Activated CD4-positive, alpha-beta memory T cell treated with anti-CD3 and anti-CD28 coated beads for 36 hours (primary cell): ENCODE measurements at regions of chr15 and their contacts with region 1.

Region 1: DNA sequence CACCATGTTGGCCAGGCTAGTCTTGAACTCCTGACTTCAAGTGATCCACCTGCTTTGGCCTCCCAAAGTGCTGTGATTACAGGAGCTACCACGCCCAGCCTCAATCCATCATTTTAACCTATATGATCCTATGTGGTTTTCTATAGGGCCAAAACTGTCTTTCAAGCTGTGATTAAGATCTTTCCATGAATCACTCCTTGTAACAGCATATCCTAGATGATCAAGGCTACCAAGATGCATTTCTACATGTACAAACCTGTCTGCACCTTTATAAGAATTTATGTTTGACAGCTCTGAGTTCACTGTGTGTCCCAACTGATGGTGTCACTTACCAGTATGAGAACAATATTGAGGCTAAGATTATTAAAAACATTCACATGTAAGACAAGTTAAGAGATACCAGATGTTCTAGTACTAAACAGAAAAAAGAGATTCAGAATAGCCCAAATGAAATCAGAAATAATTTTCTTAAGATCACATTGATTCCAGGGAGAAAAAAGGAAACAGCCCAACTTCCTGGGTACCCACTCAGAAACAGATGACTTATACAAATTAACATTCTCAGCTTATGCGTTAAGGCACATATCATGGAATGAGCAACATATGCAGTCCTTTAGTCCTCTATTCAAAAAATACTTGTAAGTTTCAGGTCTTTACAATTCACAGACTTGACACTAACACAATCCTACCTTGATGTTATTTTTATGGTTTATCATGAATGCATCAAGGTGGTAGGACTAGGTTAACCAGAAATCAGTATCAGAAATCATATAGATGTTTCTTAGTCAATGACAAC is 24.8 kb upstream of the PPIB start:
- DNase-seq: no peak
- H3K4me3 Mint-ChIP-seq: peak overlapping the region; percentile 29
- H3K27ac Mint-ChIP-seq: peak overlapping the region; percentile 76
- H3K4me1 Mint-ChIP-seq: peaks cover 18% of the 10 kb centered on the region
- H3K27me3 Mint-ChIP-seq: no peaks in the 10 kb centered on the region

Region 2: GRCh38 chr15:64151727-64152506 is 35.7 kb before region 1 on chr15 and contains the start of gene SNX22:
- CTCF ChIA-PET with region 1: no interaction called
- POLR2A ChIA-PET with region 1: no interaction called
- intact Hi-C with region 1: no loop called
- DNase-seq: peak; percentile 17
- H3K4me3 Mint-ChIP-seq: peak within 1 kb of the TSS; percentile 70
- H3K27ac Mint-ChIP-seq: no peak within 1 kb of the TSS
- H3K4me1 Mint-ChIP-seq: peaks cover 22% of the 10 kb centered on the region
- H3K27me3 Mint-ChIP-seq: peaks cover 14% of the 10 kb centered on the region
- total RNA-seq, gene SNX22: 0.38 to 0.68 TPM

Region 3: GRCh38 chr15:64162870-64163658 is 24.5 kb before region 1 on chr15 and contains the start of gene PPIB:
- CTCF ChIA-PET with region 1: interaction called, 8 read pairs
- POLR2A ChIA-PET with region 1: interaction called, 4 read pairs
- intact Hi-C with region 1: loop called (anchors 1 kb)
- DNase-seq: peak; percentile 98
- H3K4me3 Mint-ChIP-seq: peak within 1 kb of the TSS; percentile 88
- H3K27ac Mint-ChIP-seq: peak within 1 kb of the TSS; percentile 94
- H3K4me1 Mint-ChIP-seq: peaks cover 43% of the 10 kb centered on the region
- H3K27me3 Mint-ChIP-seq: no peaks in the 10 kb centered on the region
- total RNA-seq, gene PPIB: 277 to 283 TPM

Region 4: GRCh38 chr15:64222573-64223366 is 35.2 kb after region 1 on chr15:
- CTCF ChIA-PET with region 1: no interaction called
- POLR2A ChIA-PET with region 1: interaction called, 8 read pairs
- intact Hi-C with region 1: loop called (anchors 1 kb)
- DNase-seq: no peak
- H3K4me3 Mint-ChIP-seq: no peak overlapping the region
- H3K27ac Mint-ChIP-seq: no peak overlapping the region
- H3K4me1 Mint-ChIP-seq: peaks cover 21% of the 10 kb centered on the region
- H3K27me3 Mint-ChIP-seq: no peaks in the 10 kb centered on the region

Region 5: DNA sequence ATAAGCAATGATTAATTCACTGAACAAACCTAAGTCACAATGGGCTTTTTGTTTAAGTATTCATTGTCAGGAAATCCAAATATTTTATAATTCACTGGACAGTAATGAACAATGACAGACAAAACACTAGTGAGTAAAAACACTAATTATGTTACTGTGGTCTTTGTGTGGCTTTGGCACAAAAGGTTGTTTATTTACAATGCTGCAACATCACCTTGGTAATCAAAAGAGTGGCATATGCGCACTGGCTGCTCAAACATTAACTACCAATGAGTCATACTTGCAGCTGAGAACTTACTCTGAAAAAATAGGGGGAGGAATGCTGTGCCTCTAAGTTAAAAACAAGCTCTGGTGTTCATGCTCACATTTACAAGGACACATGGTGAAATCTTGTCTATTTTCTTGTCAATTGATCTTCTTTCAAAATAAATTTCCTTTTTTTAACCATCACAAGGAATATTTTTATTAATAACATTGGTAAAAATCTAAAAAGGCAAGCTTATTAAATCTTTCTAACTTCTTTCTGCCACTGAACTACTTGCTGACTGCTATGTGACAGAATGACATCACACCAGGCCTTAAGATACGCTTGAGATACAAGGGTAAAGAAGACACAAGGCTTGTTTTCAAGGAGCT is 60.4 kb after region 1 on chr15:
- CTCF ChIA-PET with region 1: no interaction called
- POLR2A ChIA-PET with region 1: interaction called, 7 read pairs
- intact Hi-C with region 1: loop called (anchors 1 kb)
- DNase-seq: peak; percentile 29
- H3K4me3 Mint-ChIP-seq: no peak overlapping the region
- H3K27ac Mint-ChIP-seq: no peak overlapping the region
- H3K4me1 Mint-ChIP-seq: peaks cover 40% of the 10 kb centered on the region
- H3K27me3 Mint-ChIP-seq: peaks cover 2% of the 10 kb centered on the region

Region 6: GRCh38 chr15:64693134-64693533 is 505.5 kb after region 1 on chr15:
- CTCF ChIA-PET with region 1: no interaction called
- POLR2A ChIA-PET with region 1: no interaction called
- intact Hi-C with region 1: loop called (anchors 1 kb)
- DNase-seq: no peak
- H3K4me3 Mint-ChIP-seq: no peak overlapping the region
- H3K27ac Mint-ChIP-seq: peak overlapping the region; percentile 25
- H3K4me1 Mint-ChIP-seq: peaks cover 17% of the 10 kb centered on the region
- H3K27me3 Mint-ChIP-seq: no peaks in the 10 kb centered on the region